ENCODE measurements at regions of chr3 and their contacts with region 1.

Region 1: GRCh38 chr3:134473868-134474546 is 11.8 kb downstream of the ANAPC13 start:
- DNase-seq: peak; percentile 91
- ATAC-seq: peak; percentile 84

Region 2: DNA sequence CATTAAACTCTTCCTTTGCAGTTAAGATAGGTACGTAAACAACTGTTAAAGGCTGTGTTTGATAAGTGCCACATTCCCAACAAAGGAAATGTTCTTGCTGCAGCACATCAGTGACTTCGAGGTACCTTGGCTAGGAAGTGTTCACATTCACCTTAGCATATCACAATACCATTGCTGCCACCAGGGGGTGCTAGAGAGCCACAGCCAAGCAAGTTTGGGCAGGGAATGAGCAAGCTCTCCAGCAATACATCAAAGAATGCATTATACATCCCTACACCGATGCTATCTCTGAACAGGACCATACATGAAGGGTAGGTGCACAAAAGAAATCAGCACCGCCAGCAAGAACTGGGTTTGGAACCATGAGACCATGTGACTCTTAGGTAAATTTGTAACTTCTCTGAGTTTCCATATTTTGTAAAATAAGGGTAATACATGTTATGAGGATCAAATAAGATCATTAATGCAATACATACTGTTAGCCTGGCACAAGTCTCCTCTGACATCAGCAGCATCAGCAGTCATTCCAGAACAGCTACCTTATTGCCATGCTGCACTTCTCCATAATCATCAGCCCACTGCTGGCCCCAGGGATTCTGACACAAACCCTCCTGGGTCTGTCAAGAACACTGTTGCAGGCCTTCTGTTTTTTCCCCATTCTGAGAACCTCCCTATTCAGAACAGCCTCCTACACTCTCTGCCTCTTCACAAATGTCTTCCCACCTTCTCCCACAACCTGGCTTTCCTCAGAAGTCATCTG is 260.9 kb before region 1 on chr3:
- intact Hi-C with region 1: loop called (anchors 10 kb)
- DNase-seq: peak; percentile 92
- ATAC-seq: peak; percentile 86

Region 3: GRCh38 chr3:134308350-134308891 is 165.6 kb before region 1 on chr3:
- intact Hi-C with region 1: loop called (anchors 2 kb)
- DNase-seq: peak; percentile 93
- ATAC-seq: peak; percentile 92

Region 4: DNA sequence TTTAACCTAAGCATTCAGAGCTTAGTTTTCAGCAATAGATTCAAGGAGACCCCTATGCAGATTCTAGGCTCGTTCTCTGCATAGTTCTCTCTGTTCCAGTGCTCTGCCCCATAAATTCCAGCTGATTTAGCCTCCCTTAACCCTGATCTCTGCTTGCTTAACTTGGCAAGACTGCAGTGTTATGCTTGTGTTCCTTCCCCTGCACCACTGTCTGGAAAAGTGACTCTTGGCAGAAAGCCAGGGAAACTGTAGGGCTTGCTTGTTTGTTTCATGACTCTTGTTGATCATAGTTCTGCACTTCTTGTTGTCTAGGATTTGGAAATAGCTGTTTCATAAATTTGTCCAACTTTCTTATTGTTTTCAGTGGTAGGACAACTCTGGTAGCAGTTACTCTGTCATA is 28.4 kb before region 1 on chr3:
- intact Hi-C with region 1: no loop called
- DNase-seq: no peak
- ATAC-seq: peak; percentile 83

Measured in sciatic nerve (tissue), 2 donors.